ENCODE measurements at regions of chr16 and their contacts with region 1.

Region 1: DNA sequence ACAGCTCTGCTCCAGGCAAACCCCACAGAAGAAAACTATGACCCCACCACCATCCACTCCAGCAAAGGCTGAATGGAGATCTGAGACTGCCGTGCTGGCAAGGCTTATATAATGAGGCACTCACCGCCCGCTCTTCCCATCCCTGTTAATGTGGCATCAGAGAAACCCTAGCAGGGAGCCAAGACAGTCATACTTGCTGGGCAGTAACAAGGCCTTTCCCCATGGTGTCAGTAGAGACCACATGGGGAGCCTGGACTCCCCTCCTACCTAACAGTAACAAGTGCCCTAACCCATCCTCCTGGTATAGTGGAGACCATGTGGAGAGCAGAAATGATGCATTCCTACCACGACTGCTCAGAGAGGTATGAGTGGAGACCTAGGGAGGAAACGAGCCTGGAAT is 235.2 kb downstream of the C16orf78 start:
- DNase-seq: no peak
- H3K4me3 ChIP-seq: no peak overlapping the region
- H3K27ac ChIP-seq: no peak overlapping the region
- H3K4me1 ChIP-seq: peaks cover 0 to 9% (median 0%) of the 10 kb centered on the region in 4 donors
- H3K27me3 ChIP-seq: no peaks in the 10 kb centered on the region
- CTCF ChIP-seq: peak; percentile 37 to 60 (median 45)
- EP300 ChIP-seq: no peak
- POLR2A ChIP-seq: no peak

Region 2: GRCh38 chr16:49330562-49331201 is 278.1 kb before region 1 on chr16:
- intact Hi-C with region 1: no loop called
- DNase-seq: peak; percentile 82
- H3K4me3 ChIP-seq: no peak overlapping the region
- H3K27ac ChIP-seq: no peak overlapping the region
- H3K4me1 ChIP-seq: no peaks in the 10 kb centered on the region
- H3K27me3 ChIP-seq: peaks cover 0 to 6% (median 0%) of the 10 kb centered on the region in 4 donors
- CTCF ChIP-seq: no peak
- EP300 ChIP-seq: no peak
- POLR2A ChIP-seq: no peak

Region 3: DNA sequence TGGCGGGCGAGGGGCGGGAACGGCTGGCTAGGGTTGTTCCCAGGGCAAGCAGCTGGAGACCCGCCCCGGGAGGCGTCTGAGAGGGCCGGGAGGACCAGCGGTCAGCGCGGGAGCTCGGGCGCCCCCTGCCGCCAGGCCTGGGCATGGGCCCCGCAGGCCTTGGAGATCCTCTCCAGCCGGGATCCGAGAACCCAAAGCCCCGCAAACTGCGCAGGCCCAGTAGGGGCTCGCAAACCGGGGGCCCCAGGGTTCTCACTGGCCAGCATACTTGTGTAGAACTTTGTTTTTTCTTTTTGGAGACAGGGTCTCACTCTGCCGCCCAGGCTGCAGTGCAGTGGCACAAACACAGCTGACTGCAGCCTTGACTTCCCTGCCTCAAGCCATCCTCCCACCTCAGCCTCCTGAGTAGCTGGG is 267.9 kb after region 1 on chr16:
- intact Hi-C with region 1: loop called (anchors 5 kb)
- DNase-seq: no peak
- H3K4me3 ChIP-seq: peak overlapping the region; percentile 45 to 57 (median 50)
- H3K27ac ChIP-seq: peak overlapping the region in 1 of 4 donors; percentile 22
- H3K4me1 ChIP-seq: peaks cover 0 to 13% (median 11%) of the 10 kb centered on the region in 4 donors
- H3K27me3 ChIP-seq: peaks cover 0 to 23% (median 0%) of the 10 kb centered on the region in 4 donors
- CTCF ChIP-seq: peak in 2 of 3 experiments; percentile 72 to 89
- EP300 ChIP-seq: no peak
- POLR2A ChIP-seq: no peak

Measured in esophagus muscularis mucosa (tissue), 4 donors.